H1 (cell line): ENCODE measurements at regions of chr6 and their contacts with region 1.

Region 1: GRCh38 chr6:137363805-137364138 is 130.4 kb downstream of the OLIG3 start:
- DNase-seq: no peak
- H3K4me3 ChIP-seq: no peak overlapping the region
- H3K27ac ChIP-seq: no peak overlapping the region
- H3K4me1 ChIP-seq: peaks cover 0 to 5% (median 1%) of the 10 kb centered on the region in 4 experiments; a peak in 2 of 7 replicates
- H3K27me3 ChIP-seq: no peaks in the 10 kb centered on the region
- CTCF ChIP-seq: no peak
- EP300 ChIP-seq: no peak
- POLR2A ChIP-seq: no peak
- RAD21 ChIP-seq: no peak

Region 2: DNA sequence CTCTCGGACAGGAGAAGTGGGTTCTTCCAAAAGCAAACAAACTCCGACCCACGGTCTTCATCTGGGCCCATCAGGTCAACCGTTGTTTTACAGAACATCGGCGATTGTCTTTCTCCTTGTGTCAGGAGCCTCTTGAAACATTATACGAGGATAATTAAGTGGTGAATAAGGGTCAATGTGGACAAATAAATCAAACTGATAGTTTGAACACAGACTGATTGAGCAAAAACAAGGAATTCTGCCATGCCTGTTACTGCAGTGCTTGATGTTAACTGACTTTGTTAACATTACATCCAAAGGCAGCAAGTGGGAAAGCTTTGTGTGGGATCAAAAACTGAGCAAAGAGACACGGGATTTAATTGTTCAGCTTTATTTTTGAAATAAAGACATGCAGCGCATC is 43.5 kb before region 1 on chr6:
- CTCF ChIA-PET with region 1: no interaction called
- POLR2A ChIA-PET with region 1: no interaction called
- DNase-seq: no peak
- H3K4me3 ChIP-seq: no peak overlapping the region
- H3K27ac ChIP-seq: no peak overlapping the region
- H3K4me1 ChIP-seq: peaks cover 0 to 2% (median 0%) of the 10 kb centered on the region in 4 experiments; a peak in 1 of 7 replicates
- H3K27me3 ChIP-seq: no peaks in the 10 kb centered on the region
- CTCF ChIP-seq: no peak
- EP300 ChIP-seq: no peak
- POLR2A ChIP-seq: no peak
- RAD21 ChIP-seq: no peak

Region 3: GRCh38 chr6:137349856-137350830 is 13.6 kb before region 1 on chr6:
- CTCF ChIA-PET with region 1: interaction called, 10 read pairs
- POLR2A ChIA-PET with region 1: no interaction called
- DNase-seq: no peak
- H3K4me3 ChIP-seq: no peak overlapping the region
- H3K27ac ChIP-seq: no peak overlapping the region
- H3K4me1 ChIP-seq: no peaks in the 10 kb centered on the region
- H3K27me3 ChIP-seq: no peaks in the 10 kb centered on the region
- CTCF ChIP-seq: no peak
- EP300 ChIP-seq: no peak
- POLR2A ChIP-seq: no peak
- RAD21 ChIP-seq: no peak

Region 4: DNA sequence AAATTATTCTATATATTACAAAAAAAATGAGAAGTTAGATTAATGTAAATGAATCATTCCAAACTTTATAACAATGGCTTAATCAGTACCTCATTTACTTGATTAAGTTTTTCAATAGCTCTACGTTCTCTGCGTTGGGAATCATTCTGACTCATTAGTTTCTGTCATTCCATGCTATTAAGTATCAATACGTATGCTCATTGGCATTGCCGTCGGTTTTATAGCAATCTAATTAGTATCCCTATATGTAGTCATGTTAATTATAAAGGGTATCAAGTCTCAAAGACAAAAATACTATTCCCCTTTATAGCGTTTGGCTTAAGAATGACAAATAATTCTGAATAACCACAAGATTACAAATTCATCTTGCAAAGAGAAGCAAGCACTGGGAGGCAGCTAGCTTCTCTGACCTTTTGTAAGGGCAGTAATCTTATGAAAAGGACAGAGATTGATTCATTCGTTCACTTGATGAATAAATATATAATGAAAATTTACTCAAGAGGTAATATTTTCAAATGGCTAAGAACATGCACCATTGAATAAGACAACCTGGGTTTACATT is 88.6 kb after region 1 on chr6:
- CTCF ChIA-PET with region 1: no interaction called
- POLR2A ChIA-PET with region 1: no interaction called
- DNase-seq: no peak
- H3K4me3 ChIP-seq: no peak overlapping the region
- H3K27ac ChIP-seq: no peak overlapping the region
- H3K4me1 ChIP-seq: no peaks in the 10 kb centered on the region
- H3K27me3 ChIP-seq: no peaks in the 10 kb centered on the region
- CTCF ChIP-seq: no peak
- EP300 ChIP-seq: no peak
- POLR2A ChIP-seq: no peak
- RAD21 ChIP-seq: no peak